Activated CD4-positive, alpha-beta memory T cell treated with anti-CD3 and anti-CD28 coated beads for 36 hours (primary cell): ENCODE measurements at regions of chr6 and their contacts with region 1.

Region 1: GRCh38 chr6:110815217-110816109 is at the start of gene CDK19:
- DNase-seq: peak; percentile 99
- H3K4me3 Mint-ChIP-seq: peak within 1 kb of the TSS; percentile 98
- H3K27ac Mint-ChIP-seq: peak within 1 kb of the TSS; percentile 100
- H3K4me1 Mint-ChIP-seq: peaks cover 34% of the 10 kb centered on the region
- H3K27me3 Mint-ChIP-seq: no peaks in the 10 kb centered on the region
- total RNA-seq, gene CDK19: 18.2 to 18.4 TPM

Region 2: DNA sequence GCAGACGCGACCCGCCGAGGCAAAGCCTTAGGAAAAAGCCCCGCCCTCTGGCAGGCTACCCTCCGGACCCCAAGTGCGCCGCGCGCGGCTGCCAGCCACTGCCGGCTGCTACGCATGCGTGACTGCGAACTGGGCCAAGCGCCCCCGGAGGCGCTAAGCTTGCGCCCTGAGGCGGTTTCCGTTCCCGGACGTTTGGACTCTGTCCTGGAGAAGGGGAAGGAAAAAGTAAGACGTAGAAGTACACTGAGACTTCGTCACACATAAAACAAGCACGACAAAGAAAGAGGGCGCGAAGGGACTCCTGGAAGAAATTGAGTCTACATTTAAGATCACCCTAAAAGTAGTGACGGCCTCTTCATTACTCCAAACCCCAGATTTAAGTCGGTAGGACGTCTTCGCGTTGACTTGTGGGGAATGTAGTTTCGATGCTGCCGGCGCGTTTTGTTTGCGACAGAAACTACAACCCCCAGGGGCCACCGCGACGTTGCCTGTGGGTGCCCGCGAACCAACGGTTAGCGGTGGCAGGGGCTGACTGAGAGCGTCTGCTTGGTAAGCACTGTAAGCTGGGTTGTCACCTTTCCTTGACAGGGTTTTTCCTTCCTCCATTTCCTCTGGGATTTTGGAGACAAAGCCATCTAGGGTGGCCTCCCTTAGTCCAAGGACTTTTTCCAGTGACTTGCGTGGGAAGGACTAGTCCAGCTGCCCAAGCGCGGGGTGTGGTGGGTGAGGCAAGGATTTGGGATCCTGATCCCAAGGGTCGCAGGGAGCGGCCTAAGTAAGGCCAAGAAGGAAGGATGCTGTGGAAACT is 1720.2 kb before region 1 on chr6 and contains the start of gene CEP57L1:
- CTCF ChIA-PET with region 1: no interaction called
- POLR2A ChIA-PET with region 1: interaction called, 3 read pairs
- intact Hi-C with region 1: loop called (anchors 2 kb)
- DNase-seq: peak; percentile 97
- H3K4me3 Mint-ChIP-seq: peak within 1 kb of the TSS; percentile 96
- H3K27ac Mint-ChIP-seq: peak within 1 kb of the TSS; percentile 100
- H3K4me1 Mint-ChIP-seq: peaks cover 44% of the 10 kb centered on the region
- H3K27me3 Mint-ChIP-seq: no peaks in the 10 kb centered on the region
- total RNA-seq, gene CEP57L1: 23.0 to 27.8 TPM

Region 3: DNA sequence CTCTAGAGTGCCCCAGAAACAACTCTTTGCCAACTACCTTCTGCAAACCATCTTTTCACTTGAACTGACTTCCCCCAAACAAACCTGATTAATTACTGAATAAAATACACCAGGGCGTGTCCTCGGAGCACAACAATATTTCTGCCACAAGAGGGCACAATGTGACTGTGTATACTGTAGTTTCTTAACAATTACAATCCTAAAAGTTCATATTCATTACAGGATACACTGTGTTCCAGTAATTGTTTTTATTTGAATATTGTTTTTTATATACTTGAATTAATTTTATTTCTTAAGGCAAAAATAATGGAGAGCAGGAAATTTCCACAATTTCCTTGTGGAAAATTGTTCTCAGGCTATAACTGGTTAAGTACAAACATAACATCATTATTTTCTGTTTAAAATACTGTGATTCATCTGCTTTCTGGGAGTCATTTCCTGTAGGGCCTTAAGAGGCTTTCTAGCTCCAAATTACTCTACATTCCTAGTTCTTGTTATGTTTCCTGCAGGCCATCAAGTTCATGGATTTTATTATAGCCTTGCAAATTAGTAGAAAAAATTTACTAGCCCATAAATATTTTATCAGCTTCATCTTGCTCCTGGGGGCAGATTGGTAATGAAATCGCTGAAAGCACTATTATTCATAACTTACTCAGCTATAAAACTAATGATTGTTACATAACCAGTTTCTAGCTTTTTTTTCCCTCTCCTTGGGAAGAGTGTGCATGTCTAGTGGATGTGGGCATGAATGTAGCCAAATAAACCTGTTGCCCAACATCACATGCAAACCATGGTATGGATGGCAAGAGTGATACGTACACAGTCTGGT is 287.1 kb before region 1 on chr6:
- CTCF ChIA-PET with region 1: interaction called, 4 read pairs
- POLR2A ChIA-PET with region 1: interaction called, 3 read pairs
- intact Hi-C with region 1: loop called (anchors 1 kb)
- DNase-seq: peak; percentile 57
- H3K4me3 Mint-ChIP-seq: no peak overlapping the region
- H3K27ac Mint-ChIP-seq: no peak overlapping the region
- H3K4me1 Mint-ChIP-seq: peaks cover 4% of the 10 kb centered on the region
- H3K27me3 Mint-ChIP-seq: no peaks in the 10 kb centered on the region

Region 4: DNA sequence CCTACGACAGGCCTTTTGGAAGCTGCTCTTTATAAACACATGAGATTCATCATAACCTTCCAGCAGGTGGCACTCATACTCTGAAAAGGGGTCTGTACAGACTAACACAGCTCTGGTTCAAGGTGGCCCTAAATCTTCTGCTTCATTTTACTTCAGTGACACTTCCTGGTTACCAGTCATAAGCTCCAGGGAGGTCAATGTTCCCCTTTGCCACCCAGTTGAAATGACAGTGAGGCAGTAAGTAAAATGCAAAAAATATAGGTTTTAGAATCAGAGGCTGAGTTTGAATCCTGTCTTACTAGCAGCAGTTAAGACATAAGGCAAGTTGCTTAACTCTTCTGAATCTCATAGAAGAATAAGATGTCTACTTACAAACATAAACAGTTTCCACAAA is 133.0 kb before region 1 on chr6:
- CTCF ChIA-PET with region 1: interaction called, 26 read pairs
- POLR2A ChIA-PET with region 1: interaction called, 14 read pairs
- intact Hi-C with region 1: loop called (anchors 1 kb)
- DNase-seq: peak; percentile 55
- H3K4me3 Mint-ChIP-seq: no peak overlapping the region
- H3K27ac Mint-ChIP-seq: peak overlapping the region; percentile 58
- H3K4me1 Mint-ChIP-seq: peaks cover 18% of the 10 kb centered on the region
- H3K27me3 Mint-ChIP-seq: no peaks in the 10 kb centered on the region

Region 5: GRCh38 chr6:110826236-110827129 is 11.0 kb after region 1 on chr6:
- CTCF ChIA-PET with region 1: no interaction called
- POLR2A ChIA-PET with region 1: no interaction called
- intact Hi-C with region 1: no loop called
- DNase-seq: no peak
- H3K4me3 Mint-ChIP-seq: no peak overlapping the region
- H3K27ac Mint-ChIP-seq: no peak overlapping the region
- H3K4me1 Mint-ChIP-seq: peaks cover 3% of the 10 kb centered on the region
- H3K27me3 Mint-ChIP-seq: no peaks in the 10 kb centered on the region

Region 6: GRCh38 chr6:110873981-110874879 is 58.8 kb after region 1 on chr6 and contains the start of gene AMD1:
- CTCF ChIA-PET with region 1: interaction called, 23 read pairs
- POLR2A ChIA-PET with region 1: interaction called, 250 read pairs
- intact Hi-C with region 1: loop called (anchors 1 kb)
- DNase-seq: peak; percentile 96
- H3K4me3 Mint-ChIP-seq: peak within 1 kb of the TSS; percentile 96
- H3K27ac Mint-ChIP-seq: peak within 1 kb of the TSS; percentile 97
- H3K4me1 Mint-ChIP-seq: peaks cover 27% of the 10 kb centered on the region
- H3K27me3 Mint-ChIP-seq: no peaks in the 10 kb centered on the region
- total RNA-seq, gene AMD1: 79.1 to 84.3 TPM

Region 7: GRCh38 chr6:110958329-110959192 is 143.1 kb after region 1 on chr6 and contains the start of gene GTF3C6:
- CTCF ChIA-PET with region 1: no interaction called
- POLR2A ChIA-PET with region 1: interaction called, 18 read pairs
- intact Hi-C with region 1: loop called (anchors 1 kb)
- DNase-seq: peak; percentile 95
- H3K4me3 Mint-ChIP-seq: peak within 1 kb of the TSS; percentile 97
- H3K27ac Mint-ChIP-seq: peak within 1 kb of the TSS; percentile 98
- H3K4me1 Mint-ChIP-seq: peaks cover 15% of the 10 kb centered on the region
- H3K27me3 Mint-ChIP-seq: peaks cover 1% of the 10 kb centered on the region
- total RNA-seq, gene GTF3C6: 97.1 to 97.7 TPM

Region 8: DNA sequence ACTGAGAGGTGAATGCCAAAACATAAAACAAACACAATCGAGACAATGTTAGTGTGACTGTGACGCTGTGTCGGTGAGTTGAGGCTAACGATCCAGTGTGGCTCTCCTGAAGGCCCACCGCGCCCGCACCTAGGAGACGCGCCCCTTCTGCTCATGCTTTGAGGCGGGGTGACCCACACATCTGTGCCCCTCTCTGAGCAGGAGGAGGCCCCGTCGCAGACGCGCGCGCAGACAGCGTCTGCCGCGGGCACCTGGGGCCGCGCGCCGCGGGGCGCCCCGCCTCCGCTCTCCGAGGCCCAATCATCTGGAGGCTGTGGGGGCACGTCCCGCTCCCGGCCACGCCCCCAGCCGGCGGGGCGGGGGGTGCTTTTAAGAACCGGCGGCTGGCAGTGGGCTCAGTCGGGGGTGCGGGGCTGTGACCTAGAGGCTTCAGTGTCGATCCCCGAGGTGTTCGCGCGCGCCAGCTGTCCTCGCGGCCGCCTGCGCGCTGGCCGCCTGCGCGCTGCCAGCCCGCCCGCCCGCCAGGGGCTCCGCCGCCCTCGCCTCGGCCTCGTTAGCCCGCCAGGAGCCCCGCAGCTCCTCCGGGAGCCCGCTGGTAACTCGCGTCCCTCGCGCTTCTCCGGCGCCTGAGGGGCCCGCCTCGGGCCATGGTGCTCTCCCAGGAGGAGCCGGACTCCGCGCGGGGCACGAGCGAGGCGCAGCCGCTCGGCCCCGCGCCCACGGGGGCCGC is 271.8 kb after region 1 on chr6 and contains the start of gene SLC16A10:
- CTCF ChIA-PET with region 1: no interaction called
- POLR2A ChIA-PET with region 1: no interaction called
- intact Hi-C with region 1: loop called (anchors 5 kb)
- DNase-seq: peak; percentile 79
- H3K4me3 Mint-ChIP-seq: peak within 1 kb of the TSS; percentile 77
- H3K27ac Mint-ChIP-seq: peak within 1 kb of the TSS; percentile 8
- H3K4me1 Mint-ChIP-seq: peaks cover 28% of the 10 kb centered on the region
- H3K27me3 Mint-ChIP-seq: peaks cover 11% of the 10 kb centered on the region
- total RNA-seq, gene SLC16A10: 3.4 to 3.6 TPM